Activated CD4-positive, alpha-beta T cell treated with anti-CD3 and anti-CD28 coated beads, Interleukin-2, amount 10 ng/mL, durations not matched to agents 24 days and 14 days (primary cell): ENCODE measurements at regions of chr19 and their contacts with region 1.

Region 1: DNA sequence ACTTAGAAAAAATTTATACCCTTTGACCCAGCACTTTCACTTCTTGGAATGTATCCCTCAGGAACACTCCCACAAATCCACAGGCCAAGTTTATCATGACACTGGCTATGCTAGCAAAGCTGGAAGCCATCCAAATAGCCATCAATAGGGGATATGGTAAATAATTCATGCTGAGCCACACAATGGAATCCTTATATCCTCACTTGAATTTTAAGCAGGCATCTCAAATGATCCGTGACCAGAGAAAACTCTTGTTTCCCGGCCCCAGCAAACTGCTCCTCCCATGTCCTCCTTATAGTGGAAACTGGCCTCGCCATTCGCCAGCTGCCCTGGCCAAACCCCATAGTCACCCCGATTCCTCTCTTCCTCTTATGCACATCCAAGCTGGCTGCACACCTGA is 37.6 kb downstream of the GRIK5 start:
- DNase-seq: no peak
- H3K4me3 Mint-ChIP-seq: no peak overlapping the region
- H3K27ac Mint-ChIP-seq: no peak overlapping the region
- H3K4me1 Mint-ChIP-seq: peaks cover 9% of the 10 kb centered on the region
- H3K27me3 Mint-ChIP-seq: peaks cover 4% of the 10 kb centered on the region

Region 2: DNA sequence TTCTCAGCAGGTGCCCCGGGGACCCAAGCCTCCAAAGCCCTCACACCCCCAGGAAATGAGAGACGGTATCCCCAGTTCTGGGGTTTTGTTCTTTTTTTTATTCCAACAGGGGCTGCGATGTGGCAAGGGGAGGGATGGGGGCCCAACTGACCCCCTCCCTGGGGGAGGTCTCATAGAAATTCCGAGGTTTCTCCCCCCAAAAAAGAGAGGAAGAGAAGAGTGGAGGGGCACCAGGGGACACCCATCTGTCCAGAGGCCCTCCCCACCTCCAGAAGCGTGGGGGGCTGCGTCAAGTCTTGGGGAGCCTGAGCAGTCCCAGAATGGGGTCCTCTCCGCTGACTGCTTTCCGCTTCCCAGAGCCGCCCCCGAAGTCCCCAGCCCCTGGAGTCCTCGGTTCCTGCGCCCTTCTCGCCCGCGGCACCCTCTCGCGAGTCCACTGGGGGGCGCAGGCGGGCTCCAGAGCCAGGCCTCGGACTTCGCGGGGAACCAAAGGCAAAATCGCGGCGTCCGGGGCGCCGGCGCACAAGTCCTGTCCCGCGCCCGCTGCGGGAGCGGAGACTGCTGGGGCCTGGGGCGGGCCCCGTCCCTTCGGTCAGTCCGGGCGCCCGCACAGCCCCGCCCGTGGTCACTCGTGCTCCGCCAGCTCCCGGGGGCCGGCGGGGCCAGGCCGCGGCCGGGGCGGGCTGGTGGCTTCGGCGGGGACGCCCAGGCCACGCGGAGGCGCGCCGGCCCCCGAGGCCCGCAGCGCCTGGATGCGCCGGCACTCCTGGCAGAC is 34.0 kb before region 1 on chr19:
- intact Hi-C with region 1: loop called (anchors 5 kb)
- DNase-seq: peak; percentile 85
- H3K4me3 Mint-ChIP-seq: no peak overlapping the region
- H3K27ac Mint-ChIP-seq: no peak overlapping the region
- H3K4me1 Mint-ChIP-seq: peaks cover 25% of the 10 kb centered on the region
- H3K27me3 Mint-ChIP-seq: peaks cover 60% of the 10 kb centered on the region